HCT116 (cell line): ENCODE measurements at regions of chr12 and their contacts with region 1.

Region 1: GRCh38 chr12:95649375-95649791 is 98.1 kb upstream of the USP44 start:
- DNase-seq: peak; percentile 64
- ATAC-seq: peak; percentile 85
- H3K4me3 ChIP-seq: no peak overlapping the region
- H3K27ac ChIP-seq: peak overlapping the region; percentile 20
- H3K4me1 ChIP-seq: peaks cover 8 to 17% of the 10 kb centered on the region in 2 experiments; a peak in 3 of 4 replicates
- H3K27me3 ChIP-seq: no peaks in the 10 kb centered on the region
- CTCF ChIP-seq: no peak
- POLR2A ChIP-seq: no peak
- RAD21 ChIP-seq: peak; percentile 21; the same call in 1 of the 2 replicates

Region 2: GRCh38 chr12:95633049-95633545 is 16.3 kb before region 1 on chr12:
- CTCF ChIA-PET with region 1: no interaction called
- POLR2A ChIA-PET with region 1: no interaction called
- RAD21 ChIA-PET with region 1: no interaction called
- intact Hi-C with region 1: loop called (anchors 1 kb)
- DNase-seq: peak; percentile 87
- ATAC-seq: peak; percentile 98
- H3K4me3 ChIP-seq: peak overlapping the region in 1 of 2 experiments; percentile 7; a peak in 1 of 4 replicates
- H3K27ac ChIP-seq: no peak overlapping the region
- H3K4me1 ChIP-seq: peaks cover 8 to 27% of the 10 kb centered on the region in 2 experiments
- H3K27me3 ChIP-seq: no peaks in the 10 kb centered on the region
- CTCF ChIP-seq: no peak
- POLR2A ChIP-seq: no peak
- RAD21 ChIP-seq: no peak